GM12878 (cell line): ENCODE measurements at regions of chr3 and their contacts with region 1.

Region 1: GRCh38 chr3:82133070-82133606 is 371.7 kb upstream of the GBE1 start:
- DNase-seq: peak; percentile 17
- ATAC-seq: peak; percentile 93
- H3K4me3 ChIP-seq: no peak overlapping the region
- H3K27ac ChIP-seq: no peak overlapping the region
- H3K4me1 ChIP-seq: no peaks in the 10 kb centered on the region
- H3K27me3 ChIP-seq: no peaks in the 10 kb centered on the region
- CTCF ChIP-seq: peak; percentile 78 to 83 (median 82)
- EP300 ChIP-seq: no peak
- POLR2A ChIP-seq: no peak
- RAD21 ChIP-seq: peak; percentile 79

Region 2: GRCh38 chr3:81490541-81491288 is 642.4 kb before region 1 on chr3:
- CTCF ChIA-PET with region 1: interaction called, 41 read pairs
- POLR2A ChIA-PET with region 1: no interaction called
- RAD21 ChIA-PET with region 1: interaction called, 10 read pairs
- SMC1A ChIA-PET with region 1: interaction called, 15 read pairs
- in situ Hi-C with region 1: loop called (anchors 10 kb)
- intact Hi-C with region 1: loop called (anchors 1 kb)
- DNase-seq: peak; percentile 36
- ATAC-seq: peak; percentile 99
- H3K4me3 ChIP-seq: no peak overlapping the region
- H3K27ac ChIP-seq: no peak overlapping the region
- H3K4me1 ChIP-seq: peaks cover 3% of the 10 kb centered on the region
- H3K27me3 ChIP-seq: no peaks in the 10 kb centered on the region
- CTCF ChIP-seq: peak; percentile 69 to 76 (median 73)
- EP300 ChIP-seq: no peak
- POLR2A ChIP-seq: no peak
- RAD21 ChIP-seq: peak; percentile 74

Region 3: DNA sequence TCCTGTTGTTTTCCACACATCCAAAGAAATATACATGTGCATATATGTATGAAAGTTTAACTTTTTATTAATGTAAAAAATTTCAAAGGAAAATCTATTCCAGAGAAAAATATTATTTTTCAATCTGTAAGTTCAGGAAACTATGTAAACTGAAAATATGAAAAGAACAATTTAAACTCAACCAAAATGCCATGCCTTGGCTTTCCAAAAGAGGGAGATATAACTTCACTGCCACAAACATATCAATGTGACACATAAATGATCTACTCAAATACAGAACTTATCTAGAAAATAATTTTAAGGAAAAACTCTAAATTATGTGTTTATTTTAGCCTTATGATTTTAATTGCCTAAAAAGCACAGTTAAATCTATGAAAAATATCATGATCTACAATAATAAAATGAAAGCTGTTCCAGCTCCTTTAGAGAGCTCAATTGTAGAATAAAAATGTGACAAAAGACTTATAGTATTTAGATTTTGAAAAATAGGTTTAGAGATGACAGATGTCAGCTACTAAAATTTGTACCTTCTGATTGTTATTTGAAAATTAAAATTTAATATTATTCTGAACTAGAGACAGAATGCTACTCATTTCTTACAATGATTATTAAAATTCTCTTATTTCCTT is 466.5 kb before region 1 on chr3:
- CTCF ChIA-PET with region 1: interaction called, 51 read pairs
- POLR2A ChIA-PET with region 1: no interaction called
- RAD21 ChIA-PET with region 1: interaction called, 13 read pairs
- SMC1A ChIA-PET with region 1: interaction called, 15 read pairs
- in situ Hi-C with region 1: loop called (anchors 10 kb)
- intact Hi-C with region 1: loop called (anchors 1 kb)
- DNase-seq: no peak
- ATAC-seq: peak; percentile 51; the same call in 2 of the 3 replicates
- H3K4me3 ChIP-seq: no peak overlapping the region
- H3K27ac ChIP-seq: no peak overlapping the region
- H3K4me1 ChIP-seq: no peaks in the 10 kb centered on the region
- H3K27me3 ChIP-seq: no peaks in the 10 kb centered on the region
- CTCF ChIP-seq: peak; percentile 52 to 72 (median 70); a peak in 5 of 6 replicates
- EP300 ChIP-seq: no peak
- POLR2A ChIP-seq: no peak
- RAD21 ChIP-seq: peak; percentile 75

Region 4: DNA sequence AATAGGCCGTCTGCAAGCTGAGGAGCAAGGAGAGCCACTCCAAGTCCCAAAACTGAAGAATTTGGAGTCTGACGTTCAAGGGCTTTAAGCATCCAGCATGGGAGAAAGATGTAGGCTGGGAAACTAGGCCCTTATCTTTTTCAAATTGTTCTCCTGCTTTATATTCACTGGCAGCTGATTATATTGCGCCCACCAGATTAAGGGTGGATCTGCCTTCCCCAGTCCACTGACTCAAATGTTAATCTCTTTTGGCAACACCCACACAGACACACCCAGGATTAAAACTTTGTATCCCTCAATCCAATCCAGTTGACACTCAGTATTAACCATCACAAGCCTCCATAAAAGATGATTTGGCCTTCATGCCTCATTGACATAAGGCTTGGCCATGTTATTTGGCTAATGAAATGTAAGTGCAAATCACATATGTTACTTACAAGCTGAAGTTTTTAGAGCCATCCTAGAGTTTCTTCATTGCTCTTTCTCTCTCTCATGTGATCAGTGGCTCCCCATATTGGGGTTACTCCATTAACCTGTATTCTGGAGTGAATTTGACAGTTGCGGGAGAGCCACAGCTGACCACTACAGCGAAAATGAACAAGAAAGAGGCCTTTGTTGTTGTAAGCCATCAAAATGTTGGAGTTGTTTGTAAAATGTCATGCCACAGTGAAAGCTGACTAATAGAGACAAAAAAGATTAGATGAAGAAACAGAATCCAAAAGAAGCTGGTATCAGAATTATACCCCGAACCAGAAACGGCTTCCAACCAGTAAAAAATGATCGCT is 433.4 kb before region 1 on chr3:
- CTCF ChIA-PET with region 1: no interaction called
- POLR2A ChIA-PET with region 1: no interaction called
- RAD21 ChIA-PET with region 1: no interaction called
- SMC1A ChIA-PET with region 1: no interaction called
- in situ Hi-C with region 1: no loop called
- intact Hi-C with region 1: no loop called
- DNase-seq: no peak
- ATAC-seq: no peak
- H3K4me3 ChIP-seq: no peak overlapping the region
- H3K27ac ChIP-seq: no peak overlapping the region
- H3K4me1 ChIP-seq: no peaks in the 10 kb centered on the region
- H3K27me3 ChIP-seq: no peaks in the 10 kb centered on the region
- CTCF ChIP-seq: no peak
- EP300 ChIP-seq: no peak
- POLR2A ChIP-seq: no peak
- RAD21 ChIP-seq: no peak

Region 5: GRCh38 chr3:81910244-81910852 is 222.8 kb before region 1 on chr3:
- CTCF ChIA-PET with region 1: interaction called, 5 read pairs
- POLR2A ChIA-PET with region 1: no interaction called
- RAD21 ChIA-PET with region 1: interaction called, 4 read pairs
- SMC1A ChIA-PET with region 1: interaction called, 3 read pairs
- in situ Hi-C with region 1: no loop called
- intact Hi-C with region 1: loop called (anchors 2 kb)
- DNase-seq: peak; percentile 21
- ATAC-seq: peak; percentile 87
- H3K4me3 ChIP-seq: no peak overlapping the region
- H3K27ac ChIP-seq: no peak overlapping the region
- H3K4me1 ChIP-seq: no peaks in the 10 kb centered on the region
- H3K27me3 ChIP-seq: no peaks in the 10 kb centered on the region
- CTCF ChIP-seq: peak; percentile 58 to 71 (median 65)
- EP300 ChIP-seq: no peak
- POLR2A ChIP-seq: no peak
- RAD21 ChIP-seq: peak; percentile 41

Region 6: DNA sequence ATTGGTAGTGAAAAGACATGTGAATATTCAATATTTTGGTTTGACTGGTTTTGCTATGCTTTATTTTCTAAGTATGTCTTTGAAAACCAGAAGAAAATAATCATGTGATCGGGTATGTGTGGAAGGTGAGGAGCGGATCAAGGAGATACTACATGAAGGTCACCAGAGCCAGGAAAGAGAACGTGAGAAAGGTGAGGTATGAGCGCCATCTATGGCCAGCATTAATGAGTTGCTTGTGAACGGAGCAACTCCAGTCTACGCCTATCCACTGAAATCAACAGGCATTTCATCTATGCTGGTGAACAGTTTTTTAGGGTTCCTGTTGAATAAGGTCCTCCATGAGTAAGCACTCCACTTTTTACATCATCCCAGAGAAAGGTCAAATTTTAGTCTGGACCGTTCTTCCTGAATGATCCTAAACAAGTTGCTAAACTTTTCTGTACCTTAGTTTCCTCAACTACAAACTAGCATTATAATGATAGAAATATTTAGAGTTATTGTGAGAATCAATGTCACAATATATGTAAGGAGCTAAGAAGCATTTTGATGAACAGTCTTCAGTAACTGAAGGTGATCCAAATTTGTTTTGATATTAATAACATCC is 1390.4 kb after region 1 on chr3:
- CTCF ChIA-PET with region 1: no interaction called
- POLR2A ChIA-PET with region 1: no interaction called
- RAD21 ChIA-PET with region 1: no interaction called
- SMC1A ChIA-PET with region 1: no interaction called
- in situ Hi-C with region 1: no loop called
- intact Hi-C with region 1: loop called (anchors 10 kb)
- DNase-seq: peak; percentile 11
- ATAC-seq: peak; percentile 98
- H3K4me3 ChIP-seq: no peak overlapping the region
- H3K27ac ChIP-seq: no peak overlapping the region
- H3K4me1 ChIP-seq: no peaks in the 10 kb centered on the region
- H3K27me3 ChIP-seq: no peaks in the 10 kb centered on the region
- CTCF ChIP-seq: peak; percentile 56 to 78 (median 65)
- EP300 ChIP-seq: no peak
- POLR2A ChIP-seq: no peak
- RAD21 ChIP-seq: peak; percentile 79